PC-3 (cell line): ENCODE measurements at regions of chrX and their contacts with region 1.

Region 1: GRCh38 chrX:105190252-105190853 is 30.1 kb downstream of the TEX13A start:
- DNase-seq: peak; percentile 74
- ATAC-seq: no peak; the same call in 1 of the 2 replicates
- H3K4me3 ChIP-seq: no peak overlapping the region
- H3K27ac ChIP-seq: no peak overlapping the region
- H3K4me1 ChIP-seq: no peaks in the 10 kb centered on the region
- H3K27me3 ChIP-seq: no peaks in the 10 kb centered on the region
- CTCF ChIP-seq: peak; percentile 81

Region 2: DNA sequence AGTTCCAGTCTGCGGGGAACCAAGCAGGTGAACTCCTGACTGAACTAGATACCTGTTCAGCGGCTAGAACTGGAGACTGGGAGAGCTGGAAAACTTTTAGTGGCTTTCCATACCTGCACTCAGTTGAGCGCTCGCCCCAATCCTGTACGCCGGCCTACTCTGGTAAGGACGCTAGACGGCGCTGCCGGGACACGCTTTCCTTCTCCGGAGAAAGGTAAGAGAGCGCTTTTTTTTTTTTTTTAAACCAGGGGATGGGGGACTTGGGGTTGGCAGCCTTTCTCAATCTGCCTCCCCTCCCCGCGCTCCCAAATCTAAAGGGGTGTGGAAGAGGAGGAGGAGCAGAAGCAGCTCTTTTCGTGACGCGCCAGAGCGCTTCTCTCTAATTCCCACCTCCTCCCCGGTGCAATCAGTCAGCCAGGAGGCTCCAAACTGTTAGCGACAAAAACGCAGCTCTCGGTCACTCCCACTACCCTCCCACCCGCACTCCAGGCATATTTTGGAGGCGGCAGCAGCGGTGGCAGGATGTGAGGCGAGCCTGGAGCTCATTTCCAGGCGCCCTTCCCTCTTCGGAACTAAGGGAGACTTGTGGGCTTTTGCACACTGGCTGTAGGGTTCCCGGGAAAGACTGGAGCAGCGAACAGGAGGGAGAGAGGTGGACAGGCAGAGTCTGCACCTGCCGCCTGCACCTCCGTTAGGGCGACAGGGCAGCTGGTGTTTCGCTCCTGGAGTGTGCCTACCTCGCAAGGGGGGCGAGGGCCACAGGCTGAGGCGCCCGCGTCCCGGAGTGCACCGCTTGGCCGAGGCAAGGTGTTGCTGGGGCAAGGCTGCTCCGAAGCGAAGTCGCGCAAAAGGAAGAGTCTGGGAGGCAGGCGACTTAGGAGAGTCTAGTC is 624.3 kb before region 1 on chrX and contains the start of gene IL1RAPL2:
- CTCF ChIA-PET with region 1: interaction called, 3 read pairs
- POLR2A ChIA-PET with region 1: no interaction called
- intact Hi-C with region 1: loop called (anchors 5 kb)
- DNase-seq: peak; percentile 81
- ATAC-seq: peak; percentile 75
- H3K4me3 ChIP-seq: peak within 1 kb of the TSS; percentile 80
- H3K27ac ChIP-seq: no peak within 1 kb of the TSS
- H3K4me1 ChIP-seq: no peaks in the 10 kb centered on the region
- H3K27me3 ChIP-seq: peaks cover 17% of the 10 kb centered on the region
- CTCF ChIP-seq: peak; percentile 82
- total RNA-seq, gene IL1RAPL2: 0.52 and 0.62 TPM in 2 replicates

Region 3: DNA sequence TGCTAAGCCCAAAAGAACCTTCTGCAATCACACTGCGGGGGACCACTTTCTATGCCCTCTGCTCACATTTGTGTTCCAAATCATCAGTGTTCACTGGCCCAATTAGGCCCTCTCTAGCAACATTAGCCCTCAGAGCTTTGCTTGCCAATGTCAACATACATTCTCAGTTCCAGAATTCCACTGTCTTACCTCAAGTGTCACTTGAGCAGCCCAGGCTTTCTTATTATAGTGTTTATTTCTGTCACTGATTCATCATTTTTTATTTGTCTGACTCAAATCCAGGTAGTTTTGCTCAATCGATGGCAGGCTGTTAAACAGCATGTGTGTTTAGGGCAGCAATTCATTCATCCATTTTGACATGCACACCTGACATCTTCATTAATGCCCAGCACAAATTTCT is 261.0 kb before region 1 on chrX:
- CTCF ChIA-PET with region 1: interaction called, 5 read pairs
- POLR2A ChIA-PET with region 1: no interaction called
- intact Hi-C with region 1: loop called (anchors 2 kb)
- DNase-seq: peak; percentile 79
- ATAC-seq: peak; percentile 92
- H3K4me3 ChIP-seq: no peak overlapping the region
- H3K27ac ChIP-seq: no peak overlapping the region
- H3K4me1 ChIP-seq: peaks cover 12% of the 10 kb centered on the region
- H3K27me3 ChIP-seq: no peaks in the 10 kb centered on the region
- CTCF ChIP-seq: no peak

Region 4: DNA sequence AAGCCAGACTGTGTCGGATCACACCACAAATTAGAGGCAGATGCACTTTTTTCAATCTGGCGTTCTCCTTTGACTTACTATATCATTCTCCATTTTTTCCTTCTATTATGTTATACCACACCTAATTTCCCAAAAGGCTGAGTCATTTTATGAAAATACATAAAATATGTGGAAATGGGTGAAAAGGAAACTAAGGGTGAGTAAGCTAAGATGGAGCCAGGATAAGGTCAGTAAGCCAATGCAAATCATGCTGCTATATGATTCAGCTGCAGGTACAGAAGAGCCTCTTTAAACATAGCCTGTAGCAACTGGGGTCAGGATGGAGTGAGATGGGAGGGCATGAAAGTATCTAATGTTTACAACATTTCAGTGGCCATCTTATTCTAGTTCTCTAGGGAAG is 124.1 kb after region 1 on chrX:
- CTCF ChIA-PET with region 1: no interaction called
- POLR2A ChIA-PET with region 1: no interaction called
- intact Hi-C with region 1: loop called (anchors 5 kb)
- DNase-seq: peak; percentile 91
- ATAC-seq: peak; percentile 92
- H3K4me3 ChIP-seq: peak overlapping the region; percentile 61
- H3K27ac ChIP-seq: peak overlapping the region; percentile 95
- H3K4me1 ChIP-seq: peaks cover 36% of the 10 kb centered on the region
- H3K27me3 ChIP-seq: no peaks in the 10 kb centered on the region
- CTCF ChIP-seq: no peak